Posterior cingulate gyrus (tissue), 11 donors: ENCODE measurements at regions of chr3 and their contacts with region 1.

Region 1: GRCh38 chr3:115217678-115218451 is 70.8 kb upstream of the ZBTB20 start:
- DNase-seq: peak in 3 of 10 donors; percentile 9 to 24 (median 11)

Region 2: GRCh38 chr3:115783938-115784738 is 566.3 kb after region 1 on chr3:
- intact Hi-C with region 1: loop called (anchors 2 kb)
- DNase-seq: peak; percentile 66 to 97 (median 81)